Transverse colon (tissue), 4 donors: ENCODE measurements at regions of chr17 and their contacts with region 1.

Region 1: DNA sequence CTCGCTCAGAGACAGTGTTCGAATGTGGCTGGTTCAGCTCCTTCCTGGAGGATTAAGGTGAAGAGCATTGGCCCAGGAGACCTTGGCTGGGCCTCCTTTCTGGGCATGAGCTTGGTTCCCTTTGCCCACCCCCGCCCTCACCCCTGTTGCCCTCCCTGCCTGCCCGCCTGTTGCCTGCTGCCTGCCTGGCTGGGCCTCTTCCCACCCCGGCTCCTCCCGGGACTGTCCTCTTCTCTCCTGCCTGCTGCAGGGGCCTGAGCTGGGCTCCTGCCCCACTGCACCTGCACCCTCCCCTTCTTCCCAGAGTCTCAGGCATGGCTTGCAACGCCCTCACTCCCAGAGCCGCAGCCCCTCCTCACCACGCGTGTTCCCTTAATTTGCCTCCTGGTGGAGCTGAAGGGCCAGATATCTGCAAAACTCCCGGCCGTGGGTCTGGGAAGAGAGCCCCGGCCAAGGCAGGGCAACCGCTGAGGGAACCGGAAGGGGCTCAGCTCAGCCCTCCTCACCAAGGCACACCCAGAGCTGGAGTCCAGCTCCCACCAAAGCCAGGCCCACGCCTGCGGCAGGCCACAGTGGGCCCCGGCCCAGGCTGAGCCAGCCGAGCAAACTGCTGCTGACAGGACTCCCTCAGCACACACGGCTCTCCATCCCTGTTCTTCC is 31.2 kb downstream of the MNT start:
- DNase-seq: no peak
- H3K4me3 ChIP-seq: no peak overlapping the region
- H3K27ac ChIP-seq: no peak overlapping the region
- H3K4me1 ChIP-seq: peaks cover 0 to 3% (median 1%) of the 10 kb centered on the region in 4 donors
- H3K27me3 ChIP-seq: no peaks in the 10 kb centered on the region
- CTCF ChIP-seq: no peak
- EP300 ChIP-seq: no peak
- POLR2A ChIP-seq: no peak

Region 2: GRCh38 chr17:491086-492021 is 1878.3 kb before region 1 on chr17:
- in situ Hi-C with region 1: no loop called
- intact Hi-C with region 1: no loop called
- DNase-seq: peak; percentile 38
- H3K4me3 ChIP-seq: peak overlapping the region; percentile 22 to 58 (median 46)
- H3K27ac ChIP-seq: peak overlapping the region; percentile 65 to 73 (median 68)
- H3K4me1 ChIP-seq: peaks cover 0 to 19% (median 14%) of the 10 kb centered on the region in 4 donors
- H3K27me3 ChIP-seq: peaks cover 30% of the 10 kb centered on the region
- CTCF ChIP-seq: peak in 4 of 5 experiments; percentile 10 to 29 (median 12)
- EP300 ChIP-seq: no peak
- POLR2A ChIP-seq: no peak

Region 3: DNA sequence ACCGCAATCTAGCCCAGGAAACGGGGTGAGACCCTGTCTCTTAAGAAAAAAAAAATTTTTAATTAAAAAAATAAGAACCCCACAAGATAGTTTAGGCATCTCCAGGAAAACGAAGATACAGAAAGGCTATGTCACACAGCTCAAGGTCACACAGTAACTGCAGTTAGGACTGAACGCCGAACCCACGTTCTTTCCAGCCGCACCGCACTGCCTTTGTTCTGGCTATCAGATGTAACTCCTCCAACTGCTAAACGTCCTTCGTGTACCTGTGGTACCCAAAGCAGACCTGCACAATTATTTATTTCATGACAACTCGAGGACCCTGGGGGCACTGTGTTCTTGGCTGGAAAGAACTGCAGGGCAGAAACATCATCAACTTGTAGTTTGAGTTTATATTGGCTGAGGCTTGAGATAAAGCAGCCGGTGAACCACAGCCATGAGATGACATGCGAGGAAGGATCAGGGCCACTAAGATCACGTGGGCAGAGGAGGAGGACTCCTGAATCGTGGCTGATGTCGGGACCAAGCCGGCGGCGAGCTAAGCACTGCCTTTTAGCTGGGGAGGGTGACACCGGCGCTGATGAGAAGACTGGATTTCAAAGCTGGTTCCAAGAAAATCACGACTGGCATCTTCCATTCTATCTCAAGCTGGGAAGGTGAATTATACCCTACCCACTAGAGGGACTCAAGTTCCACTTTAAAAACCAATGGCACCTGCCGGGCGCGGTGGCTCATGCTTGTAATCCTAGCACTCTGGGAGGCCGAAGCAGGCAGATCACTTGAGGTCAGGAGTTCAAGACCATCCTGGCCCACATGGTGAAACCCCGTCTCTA is 51.9 kb after region 1 on chr17:
- in situ Hi-C with region 1: loop called in 2 of 4 experiments (anchors 5 to 10 kb)
- intact Hi-C with region 1: no loop called
- DNase-seq: no peak
- H3K4me3 ChIP-seq: no peak overlapping the region
- H3K27ac ChIP-seq: peak overlapping the region in 3 of 4 donors; percentile 1 to 44 (median 19)
- H3K4me1 ChIP-seq: peaks cover 0 to 16% (median under 1%) of the 10 kb centered on the region in 4 donors
- H3K27me3 ChIP-seq: no peaks in the 10 kb centered on the region
- CTCF ChIP-seq: peak in 3 of 5 experiments; percentile 8 to 19 (median 11)
- EP300 ChIP-seq: no peak
- POLR2A ChIP-seq: no peak